H1 (cell line): ENCODE measurements at regions of chr11 and their contacts with region 1.

Region 1: DNA sequence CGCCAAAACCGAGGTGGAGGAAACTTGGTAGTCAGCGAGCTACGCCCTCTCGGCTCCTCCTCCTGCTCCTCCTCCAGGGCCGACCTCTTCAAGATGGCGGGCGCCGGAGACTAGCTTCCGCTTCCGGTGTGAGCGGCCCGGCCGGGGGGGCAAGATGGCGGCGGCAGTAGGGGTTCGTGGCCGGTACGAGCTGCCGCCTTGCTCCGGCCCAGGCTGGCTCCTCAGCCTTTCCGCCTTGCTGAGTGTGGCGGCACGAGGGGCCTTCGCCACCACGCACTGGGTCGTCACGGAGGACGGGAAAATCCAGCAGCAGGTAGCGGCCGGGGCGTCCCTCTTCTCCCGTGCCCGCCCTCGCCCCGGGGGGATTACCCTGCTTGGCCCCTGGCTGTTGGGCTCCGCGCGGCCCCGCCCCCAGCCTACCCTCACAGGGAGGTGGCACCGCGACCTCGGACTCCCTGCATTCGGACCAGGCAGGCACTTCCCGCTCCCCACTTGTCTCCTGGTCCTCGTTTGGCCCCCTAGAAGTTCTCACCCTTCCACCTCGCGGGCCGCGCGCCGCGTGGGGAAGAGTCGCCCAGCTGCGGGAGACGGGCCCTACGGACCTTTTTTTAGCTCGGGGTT is at the start of gene TTC17:
- DNase-seq: peak; percentile 67 to 96
- H3K4me3 ChIP-seq: peak within 1 kb of the TSS; percentile 71 to 97 (median 88)
- H3K27ac ChIP-seq: peak within 1 kb of the TSS; percentile 98
- H3K4me1 ChIP-seq: peaks cover 0 to 6% (median 4%) of the 10 kb centered on the region in 4 experiments; a peak in 3 of 7 replicates
- H3K27me3 ChIP-seq: no peaks in the 10 kb centered on the region
- CTCF ChIP-seq: no peak
- EP300 ChIP-seq: no peak
- POLR2A ChIP-seq: peak; percentile 98 to 99
- RAD21 ChIP-seq: no peak
- total RNA-seq, gene TTC17: 57.2 and 65.1 TPM in 2 replicates

Region 2: DNA sequence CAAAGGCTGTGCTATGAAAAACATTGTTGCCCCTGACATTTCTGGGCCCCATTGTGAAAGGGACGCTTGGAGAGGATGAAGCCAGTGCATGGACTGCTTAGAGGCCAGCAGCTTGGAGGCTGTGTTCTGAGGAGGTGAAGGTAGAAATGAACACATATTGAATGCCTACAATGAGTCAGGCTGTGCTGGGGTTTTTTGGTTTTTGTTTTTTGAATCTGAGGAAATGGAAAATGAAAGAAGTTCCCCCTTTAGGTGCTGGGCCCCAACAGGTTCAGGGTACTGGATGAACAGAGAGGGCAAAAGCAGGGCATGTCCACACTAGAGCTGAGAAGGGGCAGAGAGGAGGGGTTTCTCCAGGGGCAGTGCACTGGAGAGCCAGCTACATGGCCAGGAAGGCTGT is 213.3 kb before region 1 on chr11:
- CTCF ChIA-PET with region 1: no interaction called
- POLR2A ChIA-PET with region 1: no interaction called
- DNase-seq: no peak
- H3K4me3 ChIP-seq: no peak overlapping the region
- H3K27ac ChIP-seq: no peak overlapping the region
- H3K4me1 ChIP-seq: no peaks in the 10 kb centered on the region
- H3K27me3 ChIP-seq: no peaks in the 10 kb centered on the region
- CTCF ChIP-seq: no peak
- EP300 ChIP-seq: no peak
- POLR2A ChIP-seq: no peak
- RAD21 ChIP-seq: no peak

Region 3: GRCh38 chr11:43341159-43341558 is 17.8 kb before region 1 on chr11:
- CTCF ChIA-PET with region 1: interaction called, 3 read pairs
- POLR2A ChIA-PET with region 1: interaction called, 11 read pairs
- DNase-seq: no peak
- H3K4me3 ChIP-seq: no peak overlapping the region
- H3K27ac ChIP-seq: no peak overlapping the region
- H3K4me1 ChIP-seq: no peaks in the 10 kb centered on the region
- H3K27me3 ChIP-seq: no peaks in the 10 kb centered on the region
- CTCF ChIP-seq: no peak
- EP300 ChIP-seq: no peak
- POLR2A ChIP-seq: no peak
- RAD21 ChIP-seq: no peak

Region 4: GRCh38 chr11:43376594-43376993 is 17.7 kb after region 1 on chr11:
- CTCF ChIA-PET with region 1: interaction called, 8 read pairs
- POLR2A ChIA-PET with region 1: interaction called, 38 read pairs
- DNase-seq: no peak
- H3K4me3 ChIP-seq: no peak overlapping the region
- H3K27ac ChIP-seq: no peak overlapping the region
- H3K4me1 ChIP-seq: peaks cover 0 to 1% (median 0%) of the 10 kb centered on the region in 4 experiments; a peak in 3 of 7 replicates
- H3K27me3 ChIP-seq: no peaks in the 10 kb centered on the region
- CTCF ChIP-seq: no peak
- EP300 ChIP-seq: no peak
- POLR2A ChIP-seq: no peak
- RAD21 ChIP-seq: no peak

Region 5: GRCh38 chr11:43582863-43583462 is 224.1 kb after region 1 on chr11:
- CTCF ChIA-PET with region 1: no interaction called
- POLR2A ChIA-PET with region 1: no interaction called
- DNase-seq: peak in 1 of 2 experiments; percentile 63
- H3K4me3 ChIP-seq: peak overlapping the region in 3 of 4 experiments; percentile 26 to 90 (median 78); a peak in 6 of 8 replicates
- H3K27ac ChIP-seq: no peak overlapping the region
- H3K4me1 ChIP-seq: peaks cover 3 to 33% (median 10%) of the 10 kb centered on the region in 4 experiments
- H3K27me3 ChIP-seq: peaks cover 50 to 69% (median 66%) of the 10 kb centered on the region in 4 experiments
- CTCF ChIP-seq: no peak
- EP300 ChIP-seq: no peak
- POLR2A ChIP-seq: no peak
- RAD21 ChIP-seq: no peak